ENCODE measurements at regions of chr4 and their contacts with region 1.

Region 1: DNA sequence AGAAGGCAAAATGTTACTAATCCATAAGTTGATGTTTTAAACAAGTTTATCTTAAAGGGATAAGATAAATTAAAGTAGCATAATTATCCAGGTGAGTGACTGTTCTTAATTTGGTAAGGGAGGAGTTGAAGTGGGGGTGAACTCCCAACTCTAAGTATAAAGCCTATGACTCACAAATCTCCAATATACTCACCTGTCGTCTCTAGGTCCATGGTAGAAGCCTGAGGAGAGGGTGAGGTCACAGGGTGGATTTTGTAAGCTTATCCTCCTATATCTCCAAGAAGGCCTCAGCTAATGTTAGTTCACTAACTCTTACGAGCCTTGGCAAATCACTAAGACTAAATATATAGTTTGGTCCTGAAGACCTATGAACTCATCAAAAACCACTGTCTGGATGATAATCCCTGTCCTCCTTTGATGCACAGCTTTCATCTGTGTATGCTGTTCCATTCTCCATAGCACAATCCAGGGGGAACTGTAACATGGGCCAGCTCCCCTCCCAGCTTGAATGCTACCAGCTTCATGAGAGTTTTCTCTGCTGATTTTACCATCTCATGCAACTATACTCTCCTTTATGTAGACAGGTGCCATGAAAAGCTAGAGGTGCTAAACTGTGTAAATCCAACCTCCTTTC is 158.7 kb downstream of the BTC start:
- DNase-seq: no peak
- H3K4me3 ChIP-seq: no peak overlapping the region
- H3K27ac ChIP-seq: no peak overlapping the region
- H3K4me1 ChIP-seq: no peaks in the 10 kb centered on the region
- H3K27me3 ChIP-seq: no peaks in the 10 kb centered on the region
- CTCF ChIP-seq: no peak

Region 2: GRCh38 chr4:74431113-74431826 is 204.3 kb before region 1 on chr4:
- CTCF ChIA-PET with region 1: no interaction called
- POLR2A ChIA-PET with region 1: interaction called, 12 read pairs
- intact Hi-C with region 1: no loop called
- DNase-seq: no peak
- H3K4me3 ChIP-seq: no peak overlapping the region
- H3K27ac ChIP-seq: no peak overlapping the region
- H3K4me1 ChIP-seq: no peaks in the 10 kb centered on the region
- H3K27me3 ChIP-seq: no peaks in the 10 kb centered on the region
- CTCF ChIP-seq: no peak